HAP-1 (cell line): ENCODE measurements at regions of chr5 and their contacts with region 1.

Region 1: GRCh38 chr5:111550279-111551020 is 38.1 kb upstream of the STARD4 start:
- DNase-seq: peak; percentile 66 to 86
- H3K4me3 ChIP-seq: no peak overlapping the region
- H3K4me1 ChIP-seq: no peaks in the 10 kb centered on the region; the same call in 1 of the 2 replicates
- H3K27me3 ChIP-seq: no peaks in the 10 kb centered on the region

Region 2: DNA sequence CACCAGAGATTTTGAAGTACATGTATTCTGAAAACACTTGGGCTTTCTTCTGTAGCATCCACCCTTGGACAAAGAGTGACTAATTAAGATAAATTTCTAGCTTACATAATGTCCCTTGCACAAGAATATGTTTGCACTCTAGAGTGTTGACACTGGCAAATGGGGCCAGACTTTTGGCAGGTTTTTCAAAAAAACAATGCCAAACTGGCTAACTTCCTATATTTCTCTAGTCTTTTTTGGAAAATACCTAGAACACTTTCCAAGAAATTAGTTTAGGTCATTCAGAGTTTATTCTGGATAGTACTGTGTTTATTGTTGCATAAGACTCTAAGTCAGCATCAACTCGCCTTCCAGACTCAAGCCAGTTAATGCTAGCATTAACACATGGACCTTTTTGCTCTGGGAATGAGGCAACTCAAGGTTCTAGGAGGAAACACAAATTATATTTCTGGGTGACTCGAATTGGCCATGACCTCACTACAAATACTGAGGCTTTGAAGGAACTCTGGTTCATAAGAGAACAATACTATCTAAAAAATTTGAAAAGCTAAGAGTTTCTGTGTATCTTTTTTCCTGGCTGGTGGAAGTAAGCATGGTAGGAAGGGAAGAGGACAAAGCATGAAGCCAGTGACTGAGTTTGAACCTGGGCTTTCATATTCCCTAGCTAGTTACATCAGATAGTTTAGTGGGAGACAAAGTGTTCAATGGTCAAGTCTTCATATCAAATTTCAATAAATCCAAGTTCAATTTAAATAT is 104.9 kb after region 1 on chr5:
- in situ Hi-C with region 1: no loop called
- DNase-seq: no peak
- H3K4me3 ChIP-seq: no peak overlapping the region
- H3K4me1 ChIP-seq: no peaks in the 10 kb centered on the region
- H3K27me3 ChIP-seq: no peaks in the 10 kb centered on the region; the same call in 1 of the 2 replicates

Region 3: GRCh38 chr5:111853748-111854147 is 303.3 kb after region 1 on chr5:
- in situ Hi-C with region 1: loop called (anchors 25 kb)
- DNase-seq: no peak
- H3K4me3 ChIP-seq: no peak overlapping the region
- H3K4me1 ChIP-seq: no peaks in the 10 kb centered on the region
- H3K27me3 ChIP-seq: peaks cover 3% of the 10 kb centered on the region; the same call in 1 of the 2 replicates

Region 4: GRCh38 chr5:112146323-112147226 is 596.1 kb after region 1 on chr5:
- in situ Hi-C with region 1: loop called (anchors 5 kb)
- DNase-seq: peak; percentile 69
- H3K4me3 ChIP-seq: no peak overlapping the region
- H3K4me1 ChIP-seq: peaks cover 9% of the 10 kb centered on the region
- H3K27me3 ChIP-seq: no peaks in the 10 kb centered on the region